K562 (cell line): ENCODE measurements at regions of chr1 and their contacts with region 1.

Region 1: DNA sequence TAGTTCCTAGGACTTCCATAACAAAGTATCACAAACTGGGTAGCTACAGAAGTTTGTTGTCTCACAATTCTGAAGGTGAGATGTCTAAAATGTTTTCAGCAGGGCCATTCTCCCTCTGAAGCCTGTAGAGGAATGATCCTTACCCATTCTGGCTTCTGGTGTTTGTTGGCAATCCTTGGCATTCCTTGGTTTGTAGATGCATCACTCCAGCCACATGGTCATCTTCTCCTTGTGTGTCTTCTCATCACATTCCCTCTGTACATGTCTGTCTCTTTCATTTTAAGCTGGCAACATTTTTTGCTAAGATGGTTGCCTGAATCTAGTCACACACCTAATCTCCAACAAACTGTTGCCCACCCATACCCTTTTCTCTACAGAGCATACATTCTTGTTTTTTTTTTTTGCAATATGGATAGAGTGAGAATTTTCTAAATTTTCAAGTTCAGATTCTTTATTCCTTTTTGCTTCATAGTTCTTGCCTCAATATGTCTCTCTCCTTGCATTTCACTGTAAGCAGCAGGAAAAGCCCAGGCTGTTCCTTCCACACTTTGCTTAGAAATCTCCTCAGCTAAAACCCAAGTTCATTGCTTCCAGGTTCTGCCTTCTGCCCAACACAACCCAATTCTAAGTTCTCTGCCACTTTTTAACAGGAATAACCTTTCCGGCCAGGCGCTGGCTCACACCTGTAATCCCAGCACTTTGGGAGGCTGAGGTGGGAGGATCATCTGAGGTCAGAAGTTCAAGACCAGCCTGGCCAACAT is 18.3 kb downstream of the ZBED6 start:
- DNase-seq: no peak
- ATAC-seq: no peak
- H3K4me3 ChIP-seq: no peak overlapping the region
- H3K27ac ChIP-seq: no peak overlapping the region
- H3K4me1 ChIP-seq: no peaks in the 10 kb centered on the region
- H3K27me3 ChIP-seq: no peaks in the 10 kb centered on the region
- CTCF ChIP-seq: no peak
- EP300 ChIP-seq: no peak
- POLR2A ChIP-seq: no peak; the same call in 1 of the 2 replicates
- RAD21 ChIP-seq: no peak

Region 2: GRCh38 chr1:203835494-203835893 is 21.7 kb after region 1 on chr1:
- CTCF ChIA-PET with region 1: no interaction called
- POLR2A ChIA-PET with region 1: interaction called, 11 read pairs
- in situ Hi-C with region 1: no loop called
- intact Hi-C with region 1: no loop called
- DNase-seq: no peak
- ATAC-seq: no peak
- H3K4me3 ChIP-seq: no peak overlapping the region
- H3K27ac ChIP-seq: no peak overlapping the region
- H3K4me1 ChIP-seq: no peaks in the 10 kb centered on the region
- H3K27me3 ChIP-seq: no peaks in the 10 kb centered on the region
- CTCF ChIP-seq: 0 out of 6 replicates have a peak, but pooled peaks of 1 of the 3 experiments have one; percentile 14
- EP300 ChIP-seq: no peak
- POLR2A ChIP-seq: no peak
- RAD21 ChIP-seq: no peak

Region 3: DNA sequence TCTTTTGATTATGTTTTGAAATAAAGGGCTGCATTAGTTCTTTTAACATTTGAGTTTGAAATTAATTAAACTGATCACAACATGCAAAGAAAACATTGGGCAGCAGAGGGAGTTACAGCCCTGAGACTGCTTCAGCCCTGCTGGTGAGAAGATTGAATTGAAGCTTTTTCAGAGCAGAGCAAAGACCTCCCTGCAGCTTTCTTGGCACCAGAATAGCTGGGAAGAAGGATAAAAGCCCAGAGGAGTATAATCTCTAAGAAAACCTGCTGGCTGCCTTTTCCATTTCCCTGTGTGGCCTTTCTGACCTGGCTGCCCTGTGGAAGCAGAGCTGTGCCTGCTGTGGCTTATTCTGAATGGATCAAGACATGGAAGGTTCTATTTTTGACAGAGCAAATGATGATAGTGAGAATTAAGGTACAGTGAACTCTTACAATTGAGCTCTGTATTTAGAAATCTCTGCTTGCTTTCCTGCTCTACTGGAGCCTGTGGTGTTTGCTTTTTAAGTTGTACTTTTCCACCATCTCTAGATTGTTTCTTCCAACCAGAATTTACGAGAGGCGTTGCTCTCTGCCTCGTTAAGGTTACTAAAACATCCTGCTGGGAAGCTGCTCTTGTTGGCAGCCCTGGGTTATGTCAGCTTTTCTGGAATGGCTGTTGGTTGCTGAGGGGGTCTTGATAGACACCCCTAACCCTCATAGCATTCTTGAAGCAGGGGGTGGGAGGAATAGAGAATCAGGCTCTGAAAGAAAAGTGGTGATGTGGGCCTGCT is 57.5 kb after region 1 on chr1:
- CTCF ChIA-PET with region 1: no interaction called
- POLR2A ChIA-PET with region 1: no interaction called
- in situ Hi-C with region 1: no loop called
- intact Hi-C with region 1: no loop called
- DNase-seq: peak; percentile 56 to 71 (median 68)
- ATAC-seq: peak; percentile 91
- H3K4me3 ChIP-seq: no peak overlapping the region
- H3K27ac ChIP-seq: no peak overlapping the region
- H3K4me1 ChIP-seq: no peaks in the 10 kb centered on the region
- H3K27me3 ChIP-seq: no peaks in the 10 kb centered on the region
- CTCF ChIP-seq: peak; percentile 88 to 99 (median 99)
- EP300 ChIP-seq: no peak
- POLR2A ChIP-seq: 0 out of 2 replicates have a peak, but pooled peaks have one; percentile 37
- RAD21 ChIP-seq: peak; percentile 95 to 97